A549 (cell line): ENCODE measurements at regions of chr3 and their contacts with region 1.

Region 1: GRCh38 chr3:8741581-8742261 is 8.1 kb downstream of the CAV3 start:
- DNase-seq: peak; percentile 84 to 86
- ATAC-seq: peak; percentile 59 to 85
- H3K4me3 ChIP-seq: peak overlapping the region; percentile 30; the same call in 2 of the 3 replicates
- H3K27ac ChIP-seq: peak overlapping the region; percentile 80 to 81
- H3K4me1 ChIP-seq: peaks cover 50% of the 10 kb centered on the region
- CTCF ChIP-seq: no peak
- EP300 ChIP-seq: peak; percentile 40 to 62; a peak in 2 of 5 replicates
- POLR2A ChIP-seq: no peak
- RAD21 ChIP-seq: peak; percentile 8 to 17; a peak in 2 of 5 replicates

Region 2: GRCh38 chr3:8011902-8012301 is 729.8 kb before region 1 on chr3:
- CTCF ChIA-PET with region 1: no interaction called
- POLR2A ChIA-PET with region 1: no interaction called
- DNase-seq: no peak
- ATAC-seq: no peak
- H3K4me3 ChIP-seq: no peak overlapping the region
- H3K27ac ChIP-seq: no peak overlapping the region
- H3K4me1 ChIP-seq: no peaks in the 10 kb centered on the region
- CTCF ChIP-seq: no peak
- EP300 ChIP-seq: no peak
- POLR2A ChIP-seq: no peak
- RAD21 ChIP-seq: no peak

Region 3: DNA sequence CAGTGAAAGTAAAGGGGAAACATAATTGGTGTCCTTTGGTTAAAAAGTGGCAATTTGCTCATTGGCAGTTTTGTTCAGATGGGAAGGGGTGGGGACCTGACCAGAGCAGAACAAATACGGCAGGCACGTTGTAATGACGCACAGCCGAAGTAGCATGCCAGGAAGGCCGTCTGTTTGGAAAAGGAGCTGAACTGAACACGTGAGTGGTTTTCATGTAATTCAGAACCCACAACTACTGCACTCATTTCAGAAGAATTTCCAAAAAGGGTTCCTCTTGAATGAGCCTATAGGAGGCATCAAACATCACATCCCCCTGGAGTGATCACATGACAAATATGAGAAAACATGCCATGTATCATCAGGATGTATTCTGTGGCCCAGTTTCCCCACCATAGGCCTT is 283.0 kb before region 1 on chr3:
- CTCF ChIA-PET with region 1: no interaction called
- POLR2A ChIA-PET with region 1: no interaction called
- DNase-seq: no peak
- ATAC-seq: no peak
- H3K4me3 ChIP-seq: no peak overlapping the region
- H3K27ac ChIP-seq: peak overlapping the region in 1 of 2 experiments; percentile 83; a peak in 3 of 6 replicates
- H3K4me1 ChIP-seq: peaks cover 29% of the 10 kb centered on the region
- CTCF ChIP-seq: no peak
- EP300 ChIP-seq: no peak
- POLR2A ChIP-seq: no peak
- RAD21 ChIP-seq: no peak

Region 4: GRCh38 chr3:8663177-8664061 is 78.3 kb before region 1 on chr3:
- CTCF ChIA-PET with region 1: interaction called, 17 read pairs
- POLR2A ChIA-PET with region 1: no interaction called
- DNase-seq: peak; percentile 79 to 82
- ATAC-seq: peak; percentile 67 to 88
- H3K4me3 ChIP-seq: no peak overlapping the region
- H3K27ac ChIP-seq: peak overlapping the region; percentile 8 to 61; a peak in 3 of 6 replicates
- H3K4me1 ChIP-seq: peaks cover 25% of the 10 kb centered on the region
- CTCF ChIP-seq: peak; percentile 66
- EP300 ChIP-seq: no peak
- POLR2A ChIP-seq: no peak
- RAD21 ChIP-seq: peak; percentile 69 to 73

Region 5: DNA sequence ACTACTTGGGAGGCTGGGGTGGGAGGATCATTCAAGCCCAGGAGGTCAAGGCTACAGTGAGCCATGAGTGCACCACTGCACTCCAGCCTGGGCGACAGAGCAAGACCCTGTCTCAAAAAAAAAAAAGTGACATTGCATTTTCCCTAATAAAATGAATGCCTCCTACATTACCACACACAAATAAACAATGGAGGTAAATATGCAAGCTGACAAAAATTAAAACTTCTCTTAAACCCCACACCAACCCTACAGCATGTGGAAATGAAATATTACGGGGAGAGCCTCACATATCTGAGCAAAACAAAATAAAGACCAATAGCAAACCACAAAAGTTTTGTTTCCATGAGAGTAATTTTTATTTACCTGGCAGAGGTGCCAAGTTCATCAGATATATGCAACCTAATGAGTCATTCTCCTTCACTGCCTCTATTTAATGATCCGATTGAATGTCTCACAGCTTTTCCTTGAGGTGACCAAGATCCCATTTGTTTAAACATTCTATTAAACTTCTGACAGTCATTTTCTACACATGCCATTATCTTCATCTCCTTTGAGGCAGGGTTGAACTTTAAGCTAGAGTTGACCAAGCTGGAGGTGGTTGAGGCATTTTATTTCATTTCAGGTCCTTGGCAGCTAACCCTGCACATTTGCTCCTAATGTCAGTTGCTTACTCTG is 17.5 kb before region 1 on chr3:
- CTCF ChIA-PET with region 1: interaction called, 11 read pairs
- POLR2A ChIA-PET with region 1: no interaction called
- DNase-seq: no peak
- ATAC-seq: no peak; a peak in 1 of 6 replicates
- H3K4me3 ChIP-seq: no peak overlapping the region
- H3K27ac ChIP-seq: no peak overlapping the region
- H3K4me1 ChIP-seq: peaks cover 10% of the 10 kb centered on the region; the same call in 2 of the 3 replicates
- CTCF ChIP-seq: no peak
- EP300 ChIP-seq: no peak
- POLR2A ChIP-seq: no peak
- RAD21 ChIP-seq: no peak